ENCODE measurements at regions of chr12 and their contacts with region 1.

Region 1: DNA sequence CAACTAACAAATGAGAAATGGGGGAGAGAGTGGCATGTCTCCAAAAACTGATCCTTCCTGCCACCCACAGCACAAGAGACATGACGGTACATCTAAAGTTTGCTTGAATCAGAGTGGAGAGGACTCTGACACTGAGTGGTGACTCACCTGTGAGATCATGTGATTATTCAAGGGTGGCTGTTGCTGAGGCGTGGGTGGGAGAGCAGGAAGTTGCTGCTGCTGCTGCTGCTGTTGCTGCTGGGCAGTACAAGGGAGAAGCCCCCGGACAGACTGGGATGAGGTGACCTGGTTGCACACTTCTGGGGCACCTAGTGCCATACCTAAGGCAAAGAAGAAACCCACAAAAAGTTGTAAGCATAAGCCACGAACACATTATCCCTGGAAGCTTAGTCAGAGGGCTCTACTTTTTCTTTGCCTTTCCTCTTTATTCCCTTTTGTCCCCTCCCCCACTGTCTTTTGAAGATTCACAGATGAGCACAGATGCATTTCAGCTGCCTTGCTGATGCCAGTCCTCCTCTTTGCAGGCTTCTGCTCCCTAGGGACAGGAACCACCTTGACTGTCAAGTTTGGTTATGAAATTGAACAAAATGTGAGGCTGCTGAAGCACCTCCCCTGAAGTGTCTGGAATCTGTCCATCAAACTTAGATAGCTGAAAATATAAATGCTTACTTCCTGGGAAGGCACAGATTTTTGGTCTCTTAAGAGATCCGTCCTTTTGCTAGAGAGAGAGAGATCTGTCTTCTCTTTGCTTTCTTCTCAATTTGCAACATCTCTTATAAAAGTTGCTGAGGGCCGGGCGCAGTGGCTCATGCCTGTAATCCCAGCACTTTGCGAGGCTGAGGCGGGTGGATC is 29.4 kb upstream of the STAC3 start:
- DNase-seq: peak; percentile 89
- H3K4me3 ChIP-seq: peak overlapping the region in 1 of 3 experiments; percentile 7
- H3K27ac ChIP-seq: peak overlapping the region; percentile 41
- H3K4me1 ChIP-seq: peaks cover 15% of the 10 kb centered on the region
- H3K27me3 ChIP-seq: no peaks in the 10 kb centered on the region
- CTCF ChIP-seq: no peak

Region 2: GRCh38 chr12:57078519-57079404 is 201.7 kb before region 1 on chr12 and contains the start of gene NEMP1:
- CTCF ChIA-PET with region 1: no interaction called
- dilution Hi-C with region 1: no loop called
- in situ Hi-C with region 1: no loop called
- intact Hi-C with region 1: no loop called
- DNase-seq: peak; percentile 100
- H3K4me3 ChIP-seq: peak within 1 kb of the TSS; percentile 82 to 97 (median 92)
- H3K27ac ChIP-seq: peak within 1 kb of the TSS; percentile 83
- H3K4me1 ChIP-seq: peaks cover 6% of the 10 kb centered on the region
- H3K27me3 ChIP-seq: no peaks in the 10 kb centered on the region
- CTCF ChIP-seq: no peak
- total RNA-seq, gene NEMP1: 7.3 to 31.0 TPM

Region 3: DNA sequence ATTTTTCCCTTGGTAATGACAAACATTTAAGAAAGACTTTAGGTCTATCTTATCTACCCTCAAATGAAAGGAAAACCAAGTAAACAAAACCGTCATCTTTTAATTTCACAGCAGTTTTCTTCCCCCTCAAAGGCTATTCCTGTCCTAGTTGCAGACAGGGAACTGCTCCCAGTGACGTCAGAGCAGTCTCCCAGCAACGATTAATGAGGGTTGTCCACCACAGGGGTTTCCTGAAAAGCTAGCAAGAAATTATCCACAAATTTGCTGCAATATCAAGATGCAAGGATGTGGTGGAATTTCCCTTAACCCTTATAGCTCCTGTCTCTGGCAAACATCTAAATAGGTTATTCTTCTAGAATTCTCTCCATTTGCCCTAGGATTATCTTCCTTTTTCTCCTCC is 59.7 kb after region 1 on chr12:
- CTCF ChIA-PET with region 1: no interaction called
- dilution Hi-C with region 1: loop called (anchors 5 kb)
- in situ Hi-C with region 1: no loop called
- intact Hi-C with region 1: no loop called
- DNase-seq: no peak
- H3K4me3 ChIP-seq: no peak overlapping the region
- H3K27ac ChIP-seq: no peak overlapping the region
- H3K4me1 ChIP-seq: no peaks in the 10 kb centered on the region
- H3K27me3 ChIP-seq: no peaks in the 10 kb centered on the region
- CTCF ChIP-seq: no peak

Measured in mammary epithelial cell (primary cell).